ENCODE measurements at regions of chr9 and their contacts with region 1.

Region 1: DNA sequence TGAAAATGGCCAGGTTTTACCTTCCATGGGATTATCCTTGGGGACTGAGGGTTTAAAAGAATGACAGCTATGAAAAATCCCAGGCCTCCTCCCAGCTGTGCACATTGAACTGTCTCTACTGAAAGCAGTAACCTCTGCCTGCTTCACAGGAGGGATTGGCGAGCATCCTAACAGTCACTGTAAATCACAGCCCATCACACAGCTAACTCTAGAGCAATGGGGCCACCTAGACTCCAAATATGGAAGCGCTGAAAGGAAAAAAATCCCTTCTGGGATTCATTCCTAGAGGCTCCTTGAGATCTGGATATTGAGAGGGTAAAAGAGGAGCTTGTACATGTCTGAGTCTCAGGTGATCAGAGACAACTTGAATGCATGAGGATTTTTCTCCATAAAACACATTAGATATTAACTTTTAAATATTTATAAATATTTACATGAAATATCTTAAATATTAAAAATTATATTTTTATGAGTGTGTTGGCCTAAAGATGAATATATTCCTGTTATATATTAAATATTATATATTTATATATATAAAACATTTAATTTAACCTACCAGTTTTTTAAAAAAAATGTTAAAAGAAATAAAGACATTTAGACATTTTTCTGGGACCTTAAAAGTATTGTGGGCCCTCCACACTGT is 133.8 kb upstream of the SLC24A2 start:
- DNase-seq: peak; percentile 72
- H3K4me3 ChIP-seq: no peak overlapping the region
- H3K27ac ChIP-seq: no peak overlapping the region
- H3K27me3 ChIP-seq: no peaks in the 10 kb centered on the region
- CTCF ChIP-seq: peak; percentile 76

Region 2: GRCh38 chr9:19493174-19493811 is 429.3 kb before region 1 on chr9:
- in situ Hi-C with region 1: loop called (anchors 25 kb)
- DNase-seq: peak; percentile 44
- H3K4me3 ChIP-seq: peak overlapping the region; percentile 29
- H3K27ac ChIP-seq: peak overlapping the region; percentile 59
- H3K27me3 ChIP-seq: no peaks in the 10 kb centered on the region
- CTCF ChIP-seq: peak; percentile 83

Region 3: DNA sequence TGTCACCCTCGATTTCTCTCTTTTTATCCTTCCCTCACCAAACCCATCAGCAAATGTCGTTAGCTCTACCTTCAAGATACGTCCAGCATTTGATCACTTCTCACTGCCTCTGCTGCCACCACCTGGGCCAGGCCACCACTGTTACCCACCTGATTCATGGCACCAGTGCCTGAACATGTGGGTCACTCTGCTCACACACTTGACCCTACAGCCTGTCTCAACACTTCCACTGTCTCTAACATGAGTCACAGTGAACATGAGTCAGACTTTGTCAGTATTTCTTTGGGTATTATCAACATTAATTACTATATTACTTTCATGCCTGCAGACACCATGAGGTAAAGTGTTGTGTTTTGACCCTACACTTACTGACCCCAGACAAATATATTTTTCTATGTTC is 153.4 kb before region 1 on chr9:
- in situ Hi-C with region 1: no loop called
- DNase-seq: no peak
- H3K4me3 ChIP-seq: no peak overlapping the region
- H3K27ac ChIP-seq: no peak overlapping the region
- H3K27me3 ChIP-seq: no peaks in the 10 kb centered on the region
- CTCF ChIP-seq: no peak

Region 4: GRCh38 chr9:20848490-20848889 is 925.9 kb after region 1 on chr9:
- in situ Hi-C with region 1: no loop called
- DNase-seq: peak; percentile 10
- H3K4me3 ChIP-seq: no peak overlapping the region
- H3K27ac ChIP-seq: no peak overlapping the region
- H3K27me3 ChIP-seq: no peaks in the 10 kb centered on the region
- CTCF ChIP-seq: no peak

Measured in brain microvascular endothelial cell (primary cell).